MCF 10A (cell line): ENCODE measurements at regions of chr1 and their contacts with region 1.

Region 1: DNA sequence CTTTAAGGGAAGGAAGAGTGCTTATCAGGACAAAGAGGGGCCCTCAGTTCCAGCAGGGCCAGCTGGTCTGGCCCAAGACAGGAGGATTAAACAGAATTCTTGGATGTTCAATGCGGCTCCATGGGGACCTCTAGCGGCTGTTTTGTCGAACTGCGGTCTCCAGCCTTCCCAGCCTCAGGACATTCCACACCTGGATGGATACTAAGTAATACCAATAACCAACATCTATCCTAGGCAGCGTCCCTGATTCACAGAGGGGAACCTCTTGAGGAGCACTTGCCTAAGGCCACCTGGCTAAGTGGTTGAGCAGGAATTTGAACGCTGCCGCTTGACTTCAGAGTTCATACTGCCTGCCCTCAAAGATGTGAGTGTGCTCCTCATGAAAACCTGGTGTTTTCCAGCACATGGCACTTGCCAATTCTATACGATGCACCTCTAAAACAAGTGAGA is 15.5 kb upstream of the CD247 start:
- DNase-seq: peak; percentile 90
- H3K4me3 Mint-ChIP-seq: no peak overlapping the region
- H3K27ac Mint-ChIP-seq: no peak overlapping the region
- H3K4me1 Mint-ChIP-seq: peaks cover 5% of the 10 kb centered on the region
- H3K27me3 Mint-ChIP-seq: no peaks in the 10 kb centered on the region
- CTCF ChIP-seq: peak; percentile 97

Region 2: DNA sequence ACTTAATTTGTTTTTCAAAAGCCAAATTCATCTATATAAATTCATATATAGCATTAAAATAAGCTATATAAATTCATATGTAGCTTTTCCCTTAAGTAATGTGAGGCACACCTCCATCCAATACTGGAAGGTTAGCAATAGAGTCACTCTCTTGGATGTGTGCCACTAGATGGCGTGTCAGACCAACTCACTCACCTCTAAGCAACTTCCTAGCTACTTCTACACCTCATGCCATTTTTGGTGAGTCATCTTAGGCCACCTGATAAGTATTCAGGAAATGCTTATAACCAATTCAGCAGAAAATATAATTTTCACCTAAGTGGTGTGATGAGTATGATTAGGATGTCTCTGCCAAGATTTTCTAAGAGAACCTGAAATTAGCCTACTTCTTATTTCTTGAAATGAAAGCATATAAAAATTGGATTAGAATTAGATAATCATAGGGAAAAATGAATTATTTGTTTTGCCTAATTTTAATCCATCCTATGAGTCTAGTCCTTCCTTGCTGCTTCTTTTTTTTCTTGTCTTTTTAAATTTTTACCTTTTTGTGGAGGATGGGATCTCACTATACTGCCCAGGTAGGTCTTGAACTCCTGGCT is 623.4 kb before region 1 on chr1:
- CTCF ChIA-PET with region 1: interaction called, 5 read pairs
- POLR2A ChIA-PET with region 1: no interaction called
- intact Hi-C with region 1: loop called (anchors 5 kb)
- DNase-seq: peak; percentile 98
- H3K4me3 Mint-ChIP-seq: no peak overlapping the region
- H3K27ac Mint-ChIP-seq: no peak overlapping the region
- H3K4me1 Mint-ChIP-seq: no peaks in the 10 kb centered on the region
- H3K27me3 Mint-ChIP-seq: no peaks in the 10 kb centered on the region
- CTCF ChIP-seq: peak; percentile 91

Region 3: GRCh38 chr1:167244244-167244643 is 289.6 kb before region 1 on chr1:
- CTCF ChIA-PET with region 1: interaction called, 10 read pairs
- POLR2A ChIA-PET with region 1: no interaction called
- intact Hi-C with region 1: no loop called
- DNase-seq: no peak
- H3K4me3 Mint-ChIP-seq: no peak overlapping the region
- H3K27ac Mint-ChIP-seq: no peak overlapping the region
- H3K4me1 Mint-ChIP-seq: peaks cover 11% of the 10 kb centered on the region
- H3K27me3 Mint-ChIP-seq: no peaks in the 10 kb centered on the region
- CTCF ChIP-seq: no peak

Region 4: GRCh38 chr1:167401260-167401873 is 132.5 kb before region 1 on chr1:
- CTCF ChIA-PET with region 1: interaction called, 84 read pairs
- POLR2A ChIA-PET with region 1: interaction called, 3 read pairs
- intact Hi-C with region 1: loop called (anchors 1 kb)
- DNase-seq: peak; percentile 76
- H3K4me3 Mint-ChIP-seq: no peak overlapping the region
- H3K27ac Mint-ChIP-seq: peak overlapping the region; percentile 23
- H3K4me1 Mint-ChIP-seq: peaks cover 6% of the 10 kb centered on the region
- H3K27me3 Mint-ChIP-seq: no peaks in the 10 kb centered on the region
- CTCF ChIP-seq: peak; percentile 72

Region 5: GRCh38 chr1:167447521-167448136 is 86.2 kb before region 1 on chr1:
- CTCF ChIA-PET with region 1: interaction called, 51 read pairs
- POLR2A ChIA-PET with region 1: interaction called, 4 read pairs
- intact Hi-C with region 1: loop called (anchors 1 kb)
- DNase-seq: peak; percentile 60
- H3K4me3 Mint-ChIP-seq: no peak overlapping the region
- H3K27ac Mint-ChIP-seq: peak overlapping the region; percentile 31
- H3K4me1 Mint-ChIP-seq: no peaks in the 10 kb centered on the region
- H3K27me3 Mint-ChIP-seq: no peaks in the 10 kb centered on the region
- CTCF ChIP-seq: no peak

Region 6: DNA sequence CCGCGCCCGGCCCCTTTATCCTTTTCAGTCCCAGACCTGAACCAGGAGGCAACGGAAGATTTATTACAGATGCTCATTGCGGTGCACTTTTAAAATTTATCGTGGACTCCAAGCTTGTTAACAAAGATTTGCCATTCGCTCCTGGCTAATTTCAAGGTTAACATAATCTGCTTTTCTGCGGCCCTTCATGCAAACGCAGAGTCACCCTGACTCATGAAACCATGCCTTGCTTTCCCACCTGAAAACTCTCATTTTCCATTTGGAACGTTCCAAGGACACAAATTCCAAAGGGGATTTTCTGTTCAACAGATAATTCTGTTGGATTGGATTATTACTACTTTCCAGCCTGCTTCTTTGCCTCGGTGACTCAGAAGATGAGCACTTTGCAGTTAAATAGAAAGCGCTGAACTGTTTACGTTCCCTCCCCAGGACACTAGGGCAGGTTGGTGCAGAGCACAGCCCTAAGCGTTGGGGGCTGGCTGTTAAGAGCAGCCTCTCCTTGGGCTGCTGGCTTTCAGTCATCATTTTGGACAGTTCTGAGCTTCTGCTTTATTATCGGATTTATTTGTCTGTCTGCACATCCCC is 66.7 kb before region 1 on chr1:
- CTCF ChIA-PET with region 1: interaction called, 33 read pairs
- POLR2A ChIA-PET with region 1: no interaction called
- intact Hi-C with region 1: no loop called
- DNase-seq: no peak
- H3K4me3 Mint-ChIP-seq: no peak overlapping the region
- H3K27ac Mint-ChIP-seq: no peak overlapping the region
- H3K4me1 Mint-ChIP-seq: no peaks in the 10 kb centered on the region
- H3K27me3 Mint-ChIP-seq: no peaks in the 10 kb centered on the region
- CTCF ChIP-seq: no peak

Region 7: DNA sequence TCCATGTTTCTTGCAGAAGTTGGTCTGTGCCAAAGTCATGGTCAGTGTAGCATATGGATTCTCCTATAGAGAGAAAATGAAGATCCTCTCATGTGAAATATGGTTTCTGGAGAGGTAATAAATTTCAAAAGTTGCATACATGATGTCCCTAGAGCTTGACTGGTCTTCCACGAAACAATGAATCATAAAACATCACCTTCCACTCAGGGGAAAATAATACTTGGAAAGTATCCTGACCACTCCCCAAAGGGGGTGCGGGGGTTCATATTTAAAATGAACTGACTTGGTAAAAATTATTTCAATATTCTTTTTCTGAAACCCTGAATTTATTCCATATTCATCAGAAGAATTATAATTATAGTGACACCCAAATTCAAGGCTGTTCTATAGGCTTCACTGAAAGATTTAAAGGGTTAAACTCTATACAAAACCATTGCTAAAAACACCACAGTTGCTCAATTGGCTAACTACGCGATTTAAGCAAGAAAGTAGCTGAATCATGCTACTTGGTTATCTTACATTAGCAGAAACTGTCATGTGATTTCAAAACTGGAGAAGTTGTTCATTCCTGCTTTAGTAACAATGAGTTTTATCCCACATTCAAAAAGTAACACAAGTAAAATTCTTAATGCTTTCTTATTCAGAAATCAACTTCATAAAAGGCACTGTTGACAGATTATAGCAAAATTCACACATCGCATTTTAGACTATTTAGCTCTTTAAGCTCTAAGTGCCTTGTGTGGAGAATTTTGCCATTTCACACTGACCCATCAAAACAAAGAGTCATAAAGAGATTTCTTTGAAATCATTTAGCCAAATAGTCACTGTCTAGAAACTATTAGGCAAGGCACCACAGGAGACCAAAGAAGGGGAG is 14.4 kb after region 1 on chr1:
- CTCF ChIA-PET with region 1: interaction called, 91 read pairs
- POLR2A ChIA-PET with region 1: interaction called, 26 read pairs
- intact Hi-C with region 1: no loop called
- DNase-seq: peak; percentile 86
- H3K4me3 Mint-ChIP-seq: peak overlapping the region; percentile 87
- H3K27ac Mint-ChIP-seq: peak overlapping the region; percentile 76
- H3K4me1 Mint-ChIP-seq: peaks cover 53% of the 10 kb centered on the region
- H3K27me3 Mint-ChIP-seq: no peaks in the 10 kb centered on the region
- CTCF ChIP-seq: no peak

Region 8: GRCh38 chr1:167763525-167764220 is 229.8 kb after region 1 on chr1:
- CTCF ChIA-PET with region 1: no interaction called
- POLR2A ChIA-PET with region 1: no interaction called
- intact Hi-C with region 1: no loop called
- DNase-seq: peak; percentile 45
- H3K4me3 Mint-ChIP-seq: no peak overlapping the region
- H3K27ac Mint-ChIP-seq: no peak overlapping the region
- H3K4me1 Mint-ChIP-seq: peaks cover 30% of the 10 kb centered on the region
- H3K27me3 Mint-ChIP-seq: no peaks in the 10 kb centered on the region
- CTCF ChIP-seq: no peak